Naive thymus-derived CD4-positive, alpha-beta T cell (primary cell): ENCODE measurements at regions of chr1 and their contacts with region 1.

Region 1: GRCh38 chr1:26472901-26473845 is 933 bp downstream of the HMGN2 start:
- DNase-seq: peak; percentile 92 to 97 (median 95)
- ATAC-seq: peak; percentile 90
- H3K4me3 ChIP-seq: peak overlapping the region; percentile 72
- H3K4me3 Mint-ChIP-seq: peak overlapping the region; percentile 85 to 100 (median 88)
- H3K27ac ChIP-seq: peak overlapping the region; percentile 100
- H3K27ac Mint-ChIP-seq: peak overlapping the region; percentile 60 to 97 (median 87)
- H3K4me1 ChIP-seq: peaks cover 30 to 35% of the 10 kb centered on the region in 2 donors
- H3K4me1 Mint-ChIP-seq: peaks cover 28 to 62% (median 59%) of the 10 kb centered on the region in 7 donors
- H3K27me3 ChIP-seq: no peaks in the 10 kb centered on the region
- H3K27me3 Mint-ChIP-seq: peaks cover 0 to 2% (median 0%) of the 10 kb centered on the region in 5 donors

Region 2: GRCh38 chr1:25905680-25906643 is 567.2 kb before region 1 on chr1 and contains the start of gene STMN1:
- CTCF ChIA-PET with region 1: no interaction called
- POLR2A ChIA-PET with region 1: no interaction called
- intact Hi-C with region 1: loop called (anchors 1 to 5 kb)
- DNase-seq: peak; percentile 62 to 86 (median 79)
- ATAC-seq: peak; percentile 83
- H3K4me3 ChIP-seq: peak within 1 kb of the TSS; percentile 77
- H3K4me3 Mint-ChIP-seq: peak within 1 kb of the TSS; percentile 88 to 98 (median 93)
- H3K27ac ChIP-seq: peak within 1 kb of the TSS; percentile 79
- H3K27ac Mint-ChIP-seq: peak within 1 kb of the TSS; percentile 86 to 97 (median 94)
- H3K4me1 ChIP-seq: peaks cover 8 to 11% of the 10 kb centered on the region in 2 donors
- H3K4me1 Mint-ChIP-seq: peaks cover 11 to 34% (median 22%) of the 10 kb centered on the region in 7 donors
- H3K27me3 ChIP-seq: no peaks in the 10 kb centered on the region
- H3K27me3 Mint-ChIP-seq: peaks cover 0 to 32% (median 0%) of the 10 kb centered on the region in 5 donors
- total RNA-seq, gene STMN1: 29.3 to 347 (median 75.3) TPM

Region 3: GRCh38 chr1:25952841-25953401 is 520.3 kb before region 1 on chr1:
- CTCF ChIA-PET with region 1: no interaction called
- POLR2A ChIA-PET with region 1: no interaction called
- intact Hi-C with region 1: no loop called
- DNase-seq: no peak
- ATAC-seq: no peak
- H3K4me3 ChIP-seq: no peak overlapping the region
- H3K4me3 Mint-ChIP-seq: no peak overlapping the region
- H3K27ac ChIP-seq: no peak overlapping the region
- H3K27ac Mint-ChIP-seq: no peak overlapping the region
- H3K4me1 ChIP-seq: no peaks in the 10 kb centered on the region
- H3K4me1 Mint-ChIP-seq: peaks cover 0 to 16% (median 6%) of the 10 kb centered on the region in 7 donors
- H3K27me3 ChIP-seq: no peaks in the 10 kb centered on the region
- H3K27me3 Mint-ChIP-seq: peaks cover 0 to 2% (median 0%) of the 10 kb centered on the region in 5 donors

Region 4: GRCh38 chr1:26284597-26285360 is 188.4 kb before region 1 on chr1:
- CTCF ChIA-PET with region 1: interaction called, 3 read pairs
- POLR2A ChIA-PET with region 1: interaction called, 6 read pairs
- intact Hi-C with region 1: loop called (anchors 2 kb)
- DNase-seq: peak; percentile 60 to 97 (median 87)
- ATAC-seq: peak; percentile 81
- H3K4me3 ChIP-seq: peak overlapping the region; percentile 18
- H3K4me3 Mint-ChIP-seq: peak overlapping the region; percentile 44 to 88 (median 76)
- H3K27ac ChIP-seq: peak overlapping the region; percentile 86
- H3K27ac Mint-ChIP-seq: peak overlapping the region; percentile 90 to 99 (median 97)
- H3K4me1 ChIP-seq: peaks cover 89 to 91% of the 10 kb centered on the region in 2 donors
- H3K4me1 Mint-ChIP-seq: peaks cover 62 to 94% (median 86%) of the 10 kb centered on the region in 7 donors
- H3K27me3 ChIP-seq: no peaks in the 10 kb centered on the region
- H3K27me3 Mint-ChIP-seq: no peaks in the 10 kb centered on the region

Region 5: DNA sequence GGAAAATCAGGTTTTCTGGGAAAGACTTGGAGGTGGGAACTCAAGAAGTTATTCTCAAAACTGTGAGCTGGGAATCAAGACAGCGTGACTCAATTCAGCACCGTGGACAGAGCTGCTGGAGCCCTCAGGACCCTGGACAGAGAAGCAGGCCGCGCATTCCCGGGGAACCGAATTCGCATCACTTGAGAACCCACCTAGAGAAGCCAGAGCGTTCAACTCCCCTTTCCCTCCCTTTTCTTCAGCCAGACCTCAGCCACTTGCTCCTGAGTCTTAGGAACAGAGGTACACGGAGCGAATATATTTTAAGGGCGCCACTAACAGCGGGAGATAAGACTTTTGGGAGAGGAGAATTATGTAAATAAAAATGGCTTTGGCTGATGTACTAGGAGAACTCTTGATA is 64.6 kb before region 1 on chr1:
- CTCF ChIA-PET with region 1: no interaction called
- POLR2A ChIA-PET with region 1: no interaction called
- intact Hi-C with region 1: loop called in 1 of 2 experiments (anchors 1 kb)
- DNase-seq: peak; percentile 63 to 90 (median 75)
- ATAC-seq: peak; percentile 97
- H3K4me3 ChIP-seq: peak overlapping the region; percentile 11
- H3K4me3 Mint-ChIP-seq: peak overlapping the region; percentile 51 to 81 (median 73)
- H3K27ac ChIP-seq: no peak overlapping the region
- H3K27ac Mint-ChIP-seq: peak overlapping the region in 5 of 9 donors; percentile 20 to 77 (median 32)
- H3K4me1 ChIP-seq: peaks cover 10 to 18% of the 10 kb centered on the region in 2 donors
- H3K4me1 Mint-ChIP-seq: peaks cover 17 to 31% (median 21%) of the 10 kb centered on the region in 7 donors
- H3K27me3 ChIP-seq: peaks cover 10 to 13% of the 10 kb centered on the region in 2 donors
- H3K27me3 Mint-ChIP-seq: peaks cover 36 to 78% (median 51%) of the 10 kb centered on the region in 5 donors

Region 6: GRCh38 chr1:26516987-26517765 is 44.0 kb after region 1 on chr1:
- CTCF ChIA-PET with region 1: no interaction called
- POLR2A ChIA-PET with region 1: no interaction called
- intact Hi-C with region 1: no loop called
- DNase-seq: no peak
- ATAC-seq: no peak
- H3K4me3 ChIP-seq: no peak overlapping the region
- H3K4me3 Mint-ChIP-seq: no peak overlapping the region
- H3K27ac ChIP-seq: no peak overlapping the region
- H3K27ac Mint-ChIP-seq: no peak overlapping the region
- H3K4me1 ChIP-seq: no peaks in the 10 kb centered on the region
- H3K4me1 Mint-ChIP-seq: no peaks in the 10 kb centered on the region
- H3K27me3 ChIP-seq: no peaks in the 10 kb centered on the region
- H3K27me3 Mint-ChIP-seq: peaks cover 0 to 17% (median 0%) of the 10 kb centered on the region in 5 donors

Region 7: GRCh38 chr1:26529655-26530409 is 56.7 kb after region 1 on chr1 and contains the start of gene RPS6KA1:
- CTCF ChIA-PET with region 1: interaction called, 3 read pairs
- POLR2A ChIA-PET with region 1: no interaction called
- intact Hi-C with region 1: loop called in 1 of 2 experiments (anchors 1 kb)
- DNase-seq: peak; percentile 28 to 81 (median 57)
- ATAC-seq: peak; percentile 93
- H3K4me3 ChIP-seq: peak within 1 kb of the TSS; percentile 48
- H3K4me3 Mint-ChIP-seq: peak within 1 kb of the TSS; percentile 80 to 95 (median 90)
- H3K27ac ChIP-seq: peak within 1 kb of the TSS; percentile 75
- H3K27ac Mint-ChIP-seq: peak within 1 kb of the TSS; percentile 69 to 96 (median 85)
- H3K4me1 ChIP-seq: peaks cover 16 to 20% of the 10 kb centered on the region in 2 donors
- H3K4me1 Mint-ChIP-seq: peaks cover 16 to 35% (median 27%) of the 10 kb centered on the region in 7 donors
- H3K27me3 ChIP-seq: no peaks in the 10 kb centered on the region
- H3K27me3 Mint-ChIP-seq: peaks cover 0 to 7% (median 0%) of the 10 kb centered on the region in 5 donors
- total RNA-seq, gene RPS6KA1: 53.8 to 205 (median 97.6) TPM

Region 8: GRCh38 chr1:26618561-26618960 is 145.4 kb after region 1 on chr1:
- CTCF ChIA-PET with region 1: no interaction called
- POLR2A ChIA-PET with region 1: no interaction called
- intact Hi-C with region 1: no loop called
- DNase-seq: no peak
- ATAC-seq: no peak
- H3K4me3 ChIP-seq: no peak overlapping the region
- H3K4me3 Mint-ChIP-seq: peak overlapping the region in 5 of 10 donors; percentile 32 to 100 (median 91)
- H3K27ac ChIP-seq: no peak overlapping the region
- H3K27ac Mint-ChIP-seq: peak overlapping the region in 7 of 9 donors; percentile 21 to 98 (median 95)
- H3K4me1 ChIP-seq: peaks cover 6 to 7% of the 10 kb centered on the region in 2 donors
- H3K4me1 Mint-ChIP-seq: peaks cover 8 to 36% (median 27%) of the 10 kb centered on the region in 7 donors
- H3K27me3 ChIP-seq: no peaks in the 10 kb centered on the region
- H3K27me3 Mint-ChIP-seq: peaks cover 0 to 4% (median 0%) of the 10 kb centered on the region in 5 donors

Region 9: GRCh38 chr1:26900001-26900814 is 427.0 kb after region 1 on chr1 and contains the start of gene GPATCH3:
- CTCF ChIA-PET with region 1: no interaction called
- POLR2A ChIA-PET with region 1: interaction called, 4 read pairs
- intact Hi-C with region 1: loop called in 1 of 2 experiments (anchors 1 kb)
- DNase-seq: peak; percentile 68 to 89 (median 86)
- ATAC-seq: peak; percentile 93
- H3K4me3 ChIP-seq: peak within 1 kb of the TSS; percentile 94
- H3K4me3 Mint-ChIP-seq: peak within 1 kb of the TSS; percentile 87 to 99 (median 96)
- H3K27ac ChIP-seq: peak within 1 kb of the TSS; percentile 90
- H3K27ac Mint-ChIP-seq: peak within 1 kb of the TSS; percentile 94 to 100 (median 99)
- H3K4me1 ChIP-seq: peaks cover 10 to 16% of the 10 kb centered on the region in 2 donors
- H3K4me1 Mint-ChIP-seq: peaks cover 24 to 46% (median 39%) of the 10 kb centered on the region in 7 donors
- H3K27me3 ChIP-seq: no peaks in the 10 kb centered on the region
- H3K27me3 Mint-ChIP-seq: no peaks in the 10 kb centered on the region
- total RNA-seq, gene GPATCH3: 17.0 to 38.4 (median 22.6) TPM